ENCODE measurements at regions of chr1 and their contacts with region 1.

Region 1: DNA sequence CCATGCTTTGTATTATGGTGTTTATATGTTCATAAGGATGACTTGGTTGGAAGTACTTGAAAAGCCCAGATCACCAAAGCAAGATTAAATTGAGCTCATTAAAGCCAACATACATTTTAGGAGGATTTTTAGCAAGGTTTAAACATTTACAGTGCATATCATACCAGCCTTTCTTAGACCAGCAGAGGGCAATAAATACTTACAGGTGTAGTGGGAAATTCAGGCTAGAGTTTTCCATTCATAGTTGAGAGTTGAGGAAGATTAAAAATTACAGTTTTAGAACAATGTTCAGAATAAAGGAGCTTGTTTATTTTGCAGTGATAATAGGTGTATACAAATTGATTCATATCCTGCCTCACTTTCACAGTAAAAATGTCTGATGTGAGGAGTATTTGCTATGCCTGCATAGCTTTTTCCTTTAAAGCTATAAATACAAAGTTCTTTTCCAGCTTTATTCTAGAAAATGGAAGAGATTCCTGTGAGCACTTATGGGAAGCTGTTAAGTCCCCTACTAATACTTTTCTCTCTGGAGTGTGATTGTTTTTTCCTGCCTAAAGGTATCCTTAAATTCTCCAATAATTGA is 35.3 kb downstream of the DTL start:
- DNase-seq: no peak

Region 2: GRCh38 chr1:212179394-212180076 is 108.7 kb after region 1 on chr1:
- intact Hi-C with region 1: no loop called
- DNase-seq: no peak

Region 3: GRCh38 chr1:212291505-212292134 is 220.8 kb after region 1 on chr1:
- intact Hi-C with region 1: loop called (anchors 5 kb)
- DNase-seq: no peak

Region 4: GRCh38 chr1:212368073-212368484 is 297.3 kb after region 1 on chr1:
- intact Hi-C with region 1: loop called (anchors 2 kb)
- DNase-seq: peak in 2 of 10 donors; percentile 22 to 43

Measured in posterior cingulate gyrus (tissue), 11 donors.